Activated CD4-positive, alpha-beta memory T cell treated with anti-CD3 and anti-CD28 coated beads for 36 hours (primary cell): ENCODE measurements at regions of chr20 and their contacts with region 1.

Region 1: DNA sequence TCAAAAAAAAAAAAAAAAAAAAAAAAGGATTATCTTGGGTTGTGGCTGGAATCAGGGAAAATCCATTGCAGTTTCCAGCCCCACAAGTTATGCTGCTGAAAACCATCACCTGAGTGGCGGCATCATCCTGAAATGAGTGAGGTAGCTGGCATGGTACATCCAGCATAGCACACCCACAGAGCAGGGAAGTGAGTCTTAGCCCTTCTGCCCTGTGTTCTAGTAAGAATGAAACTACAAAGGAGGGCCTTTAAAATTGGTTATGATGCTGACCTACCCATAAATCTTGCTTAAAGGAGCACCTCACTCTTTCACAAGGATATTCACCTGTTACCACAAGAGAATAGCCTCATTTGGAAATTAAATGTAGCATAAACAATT is 119.2 kb downstream of the NFATC2 start:
- DNase-seq: peak; percentile 78
- H3K4me3 Mint-ChIP-seq: peak overlapping the region; percentile 13
- H3K27ac Mint-ChIP-seq: peak overlapping the region; percentile 90
- H3K4me1 Mint-ChIP-seq: peaks cover 86% of the 10 kb centered on the region
- H3K27me3 Mint-ChIP-seq: no peaks in the 10 kb centered on the region

Region 2: DNA sequence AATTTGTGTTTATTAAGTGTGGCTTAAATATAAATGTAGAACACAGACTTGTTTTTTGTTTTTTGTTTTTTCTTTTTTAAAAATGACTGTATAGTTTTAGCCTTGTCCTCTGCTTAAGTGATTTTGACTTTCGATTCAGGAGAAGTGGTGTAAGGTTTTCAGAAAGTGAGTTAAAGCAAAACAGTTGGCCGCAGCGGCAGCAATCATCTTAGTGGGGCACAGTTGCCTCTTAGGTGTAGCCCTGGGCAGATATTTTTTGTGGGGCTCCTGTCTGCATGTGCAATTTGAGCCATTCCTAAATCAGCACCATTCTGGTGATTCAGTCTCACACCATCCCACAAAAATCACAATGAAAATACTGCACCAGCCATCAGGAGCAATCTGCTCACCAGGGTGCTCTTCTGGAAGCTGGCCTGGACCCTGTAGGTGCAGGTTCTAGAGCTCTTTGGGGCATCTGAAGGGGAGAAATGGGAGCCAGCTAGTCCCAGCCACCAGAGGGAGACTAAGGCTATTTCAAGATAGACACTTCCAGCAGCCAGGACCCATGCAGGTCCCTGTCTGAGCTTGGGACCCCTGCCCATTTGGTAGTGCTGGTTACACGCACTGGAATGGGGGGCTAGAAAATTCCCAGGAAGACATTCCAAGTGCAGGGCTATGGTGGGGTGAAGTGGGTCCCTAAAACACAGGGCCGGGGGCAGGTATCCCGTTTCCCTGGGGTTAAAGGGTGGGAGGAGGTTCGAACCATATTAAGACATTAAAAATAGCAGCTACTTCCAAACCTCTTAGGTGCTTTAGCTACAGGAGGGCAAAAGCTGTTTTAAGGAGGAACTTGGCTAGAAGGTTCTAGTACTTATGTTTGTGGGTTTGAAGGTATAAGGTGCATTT is 37.4 kb before region 1 on chr20:
- CTCF ChIA-PET with region 1: interaction called, 13 read pairs
- POLR2A ChIA-PET with region 1: interaction called, 3 read pairs
- intact Hi-C with region 1: loop called (anchors 1 kb)
- DNase-seq: peak; percentile 50
- H3K4me3 Mint-ChIP-seq: no peak overlapping the region
- H3K27ac Mint-ChIP-seq: no peak overlapping the region
- H3K4me1 Mint-ChIP-seq: peaks cover 73% of the 10 kb centered on the region
- H3K27me3 Mint-ChIP-seq: no peaks in the 10 kb centered on the region

Region 3: DNA sequence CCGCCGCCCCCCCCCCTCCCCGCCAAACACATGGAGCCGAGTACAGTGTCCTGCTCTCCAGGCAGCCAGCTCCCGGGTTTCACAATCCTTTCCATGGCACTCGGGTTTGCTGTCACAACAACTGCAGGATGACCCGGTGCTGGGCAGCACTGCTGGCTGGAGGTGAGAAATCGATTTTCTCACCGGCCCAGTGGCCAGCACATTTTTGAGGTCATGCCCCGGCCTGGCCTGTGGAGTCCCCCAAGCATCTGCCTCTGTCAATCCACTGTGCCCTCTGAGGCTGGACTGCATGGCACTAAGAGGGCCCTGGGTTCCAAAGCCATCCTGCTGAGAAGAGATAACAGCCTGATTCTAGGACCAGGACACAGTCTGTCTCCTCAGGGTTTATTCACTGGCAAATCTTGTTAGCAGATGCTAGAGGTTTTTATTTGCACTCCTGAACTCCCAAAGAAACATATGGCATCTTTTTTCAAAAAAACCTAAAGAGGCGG is 10.2 kb before region 1 on chr20:
- CTCF ChIA-PET with region 1: interaction called, 3 read pairs
- POLR2A ChIA-PET with region 1: interaction called, 4 read pairs
- intact Hi-C with region 1: loop called (anchors 1 kb)
- DNase-seq: no peak
- H3K4me3 Mint-ChIP-seq: no peak overlapping the region
- H3K27ac Mint-ChIP-seq: no peak overlapping the region
- H3K4me1 Mint-ChIP-seq: peaks cover 87% of the 10 kb centered on the region
- H3K27me3 Mint-ChIP-seq: no peaks in the 10 kb centered on the region

Region 4: DNA sequence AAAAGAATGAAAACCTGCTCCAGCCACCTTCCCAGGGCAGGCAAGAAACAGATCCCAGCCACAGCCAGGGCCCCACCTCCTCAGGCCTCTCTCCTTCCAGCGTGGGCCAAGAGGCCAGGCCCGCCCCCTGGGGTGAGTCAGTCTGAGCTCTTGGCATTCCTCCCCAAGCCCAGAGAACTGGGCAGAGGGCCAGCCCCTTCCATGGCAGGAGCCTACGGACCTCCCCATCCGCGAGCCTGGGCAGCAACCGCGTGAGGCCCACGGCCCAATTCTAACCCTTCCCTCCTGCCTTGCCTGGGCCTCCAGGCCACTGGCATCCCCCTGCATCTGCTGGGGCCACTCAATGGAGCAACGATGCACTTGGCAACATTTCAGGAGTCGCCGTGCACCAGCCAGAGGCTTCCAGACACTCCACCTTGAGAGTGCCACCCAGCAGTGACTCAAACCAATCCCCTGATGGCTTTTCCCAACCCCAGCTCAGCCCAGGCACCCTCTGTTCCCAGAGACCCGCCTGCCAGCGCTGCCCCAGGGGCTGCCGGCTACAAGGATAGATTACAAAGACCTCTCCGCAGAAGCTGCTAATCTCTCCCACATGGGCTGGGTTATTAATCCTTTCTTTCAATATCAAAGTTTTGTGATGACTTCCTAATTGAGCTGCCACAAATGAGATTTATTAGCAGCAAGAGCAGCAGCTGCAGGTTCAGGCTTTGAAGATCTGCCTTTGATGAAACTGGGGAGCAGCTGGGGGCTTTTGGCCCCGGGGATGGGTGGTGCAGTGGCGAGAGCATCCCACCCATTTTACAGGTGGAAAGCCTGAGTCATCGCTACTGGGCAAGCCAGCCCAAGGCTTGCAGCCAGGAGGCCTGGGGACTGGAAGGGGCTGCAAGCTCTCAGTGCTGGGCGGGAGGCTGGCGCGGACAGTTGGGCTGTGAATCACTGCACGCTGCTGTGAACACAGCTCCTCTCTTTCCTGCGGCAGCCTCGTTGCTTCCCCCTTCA is 33.5 kb after region 1 on chr20:
- CTCF ChIA-PET with region 1: no interaction called
- POLR2A ChIA-PET with region 1: no interaction called
- intact Hi-C with region 1: no loop called
- DNase-seq: peak; percentile 47
- H3K4me3 Mint-ChIP-seq: no peak overlapping the region
- H3K27ac Mint-ChIP-seq: peak overlapping the region; percentile 56
- H3K4me1 Mint-ChIP-seq: peaks cover 31% of the 10 kb centered on the region
- H3K27me3 Mint-ChIP-seq: no peaks in the 10 kb centered on the region

Region 5: GRCh38 chr20:51500311-51500710 is 77.0 kb after region 1 on chr20:
- CTCF ChIA-PET with region 1: interaction called, 3 read pairs
- POLR2A ChIA-PET with region 1: interaction called, 3 read pairs
- intact Hi-C with region 1: loop called (anchors 1 kb)
- DNase-seq: peak; percentile 68
- H3K4me3 Mint-ChIP-seq: no peak overlapping the region
- H3K27ac Mint-ChIP-seq: peak overlapping the region; percentile 94
- H3K4me1 Mint-ChIP-seq: peaks cover 73% of the 10 kb centered on the region
- H3K27me3 Mint-ChIP-seq: no peaks in the 10 kb centered on the region

Region 6: GRCh38 chr20:51608061-51608460 is 184.8 kb after region 1 on chr20:
- CTCF ChIA-PET with region 1: interaction called, 3 read pairs
- POLR2A ChIA-PET with region 1: no interaction called
- intact Hi-C with region 1: loop called (anchors 5 kb)
- DNase-seq: peak; percentile 61
- H3K4me3 Mint-ChIP-seq: peak overlapping the region; percentile 65
- H3K27ac Mint-ChIP-seq: peak overlapping the region; percentile 88
- H3K4me1 Mint-ChIP-seq: peaks cover 48% of the 10 kb centered on the region
- H3K27me3 Mint-ChIP-seq: peaks cover 23% of the 10 kb centered on the region

Region 7: DNA sequence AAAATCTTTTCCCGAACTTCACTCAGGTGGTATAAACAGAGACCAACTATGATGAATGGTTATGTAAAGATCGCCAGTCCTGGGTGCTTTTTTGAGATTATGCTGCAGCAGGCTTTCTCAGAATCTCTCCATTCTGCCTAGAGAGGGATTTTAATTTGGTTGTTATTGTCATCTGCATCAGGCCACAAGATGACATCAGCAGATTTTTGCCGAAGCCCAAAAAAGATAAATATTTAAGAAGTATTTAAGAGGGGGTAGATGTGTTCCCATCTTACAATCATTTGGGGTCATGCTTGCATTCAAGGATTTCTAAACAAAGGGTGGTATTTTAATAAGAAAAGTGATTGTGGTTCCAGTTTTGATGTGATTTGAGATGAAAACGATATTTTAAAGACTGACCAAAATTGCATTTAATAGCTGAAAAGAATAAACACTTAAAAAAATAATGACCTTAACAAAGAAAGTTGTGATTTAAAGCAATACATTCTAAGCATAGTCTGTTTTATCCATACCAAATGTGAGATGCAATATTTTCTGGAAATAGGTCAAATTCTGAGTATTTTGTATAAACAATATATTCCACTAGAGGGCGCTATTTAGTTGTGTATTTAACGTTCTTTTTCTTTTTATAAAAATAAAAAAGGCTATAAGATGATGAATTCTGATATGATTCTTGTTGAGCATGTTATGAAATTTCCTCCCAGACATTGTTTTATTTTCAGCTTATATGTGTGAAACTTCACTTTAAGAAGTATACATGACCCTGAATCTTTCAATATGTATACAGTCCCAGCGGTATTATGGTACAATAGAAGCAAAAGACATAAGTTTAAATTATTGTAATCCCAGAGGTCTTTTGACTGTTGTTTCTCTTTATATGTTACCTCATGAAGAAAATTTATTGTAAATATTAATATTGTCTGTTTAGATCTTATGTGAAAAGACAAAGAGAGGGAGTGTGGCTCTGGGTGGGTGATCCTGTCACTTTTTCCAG is 819.3 kb after region 1 on chr20:
- CTCF ChIA-PET with region 1: no interaction called
- POLR2A ChIA-PET with region 1: no interaction called
- intact Hi-C with region 1: no loop called
- DNase-seq: no peak
- H3K4me3 Mint-ChIP-seq: no peak overlapping the region
- H3K27ac Mint-ChIP-seq: no peak overlapping the region
- H3K4me1 Mint-ChIP-seq: no peaks in the 10 kb centered on the region
- H3K27me3 Mint-ChIP-seq: peaks cover 2% of the 10 kb centered on the region